ENCODE measurements at regions of chr6 and their contacts with region 1.

Region 1: GRCh38 chr6:97068211-97068610 is 143.7 kb downstream of the KLHL32 start:
- DNase-seq: no peak
- H3K4me3 ChIP-seq: no peak overlapping the region
- H3K27ac ChIP-seq: no peak overlapping the region
- H3K4me1 ChIP-seq: no peaks in the 10 kb centered on the region
- H3K27me3 ChIP-seq: no peaks in the 10 kb centered on the region
- CTCF ChIP-seq: peak in 2 of 3 experiments; percentile 11 to 50
- POLR2A ChIP-seq: no peak

Region 2: DNA sequence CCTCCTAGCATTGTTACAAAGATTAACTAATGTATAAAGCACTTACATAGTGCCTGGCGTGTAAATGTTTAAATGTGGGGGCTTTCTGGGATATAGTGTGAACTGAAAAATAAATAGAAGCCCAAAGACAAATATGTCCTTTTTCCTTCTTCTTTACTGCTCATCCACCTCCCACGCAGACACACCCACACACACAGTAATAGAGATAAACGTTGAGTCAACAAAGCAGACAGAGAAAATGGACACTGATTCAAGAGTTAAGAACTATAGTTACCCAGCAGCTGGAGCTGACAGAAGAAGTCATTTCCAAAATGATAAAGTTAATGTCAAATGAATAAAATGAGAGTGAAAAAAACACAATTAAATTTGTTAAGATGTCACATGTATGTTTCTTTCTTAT is 437.0 kb before region 1 on chr6:
- intact Hi-C with region 1: loop called (anchors 10 kb)
- DNase-seq: peak; percentile 61
- H3K4me3 ChIP-seq: no peak overlapping the region
- H3K27ac ChIP-seq: no peak overlapping the region
- H3K4me1 ChIP-seq: peaks cover 5% of the 10 kb centered on the region
- H3K27me3 ChIP-seq: no peaks in the 10 kb centered on the region
- CTCF ChIP-seq: no peak
- POLR2A ChIP-seq: no peak

Region 3: GRCh38 chr6:96907498-96907897 is 160.7 kb before region 1 on chr6:
- intact Hi-C with region 1: loop called (anchors 10 kb)
- DNase-seq: peak; percentile 22
- H3K4me3 ChIP-seq: no peak overlapping the region
- H3K27ac ChIP-seq: no peak overlapping the region
- H3K4me1 ChIP-seq: no peaks in the 10 kb centered on the region
- H3K27me3 ChIP-seq: no peaks in the 10 kb centered on the region
- CTCF ChIP-seq: no peak
- POLR2A ChIP-seq: no peak

Region 4: GRCh38 chr6:97240222-97240621 is 172.0 kb after region 1 on chr6:
- intact Hi-C with region 1: no loop called
- DNase-seq: no peak
- H3K4me3 ChIP-seq: no peak overlapping the region
- H3K27ac ChIP-seq: no peak overlapping the region
- H3K4me1 ChIP-seq: no peaks in the 10 kb centered on the region
- H3K27me3 ChIP-seq: no peaks in the 10 kb centered on the region
- CTCF ChIP-seq: no peak
- POLR2A ChIP-seq: no peak

Measured in testis (tissue), 5 donors.